Common myeloid progenitor, CD34-positive (primary cell): ENCODE measurements at regions of chr11 and their contacts with region 1.

Region 1: DNA sequence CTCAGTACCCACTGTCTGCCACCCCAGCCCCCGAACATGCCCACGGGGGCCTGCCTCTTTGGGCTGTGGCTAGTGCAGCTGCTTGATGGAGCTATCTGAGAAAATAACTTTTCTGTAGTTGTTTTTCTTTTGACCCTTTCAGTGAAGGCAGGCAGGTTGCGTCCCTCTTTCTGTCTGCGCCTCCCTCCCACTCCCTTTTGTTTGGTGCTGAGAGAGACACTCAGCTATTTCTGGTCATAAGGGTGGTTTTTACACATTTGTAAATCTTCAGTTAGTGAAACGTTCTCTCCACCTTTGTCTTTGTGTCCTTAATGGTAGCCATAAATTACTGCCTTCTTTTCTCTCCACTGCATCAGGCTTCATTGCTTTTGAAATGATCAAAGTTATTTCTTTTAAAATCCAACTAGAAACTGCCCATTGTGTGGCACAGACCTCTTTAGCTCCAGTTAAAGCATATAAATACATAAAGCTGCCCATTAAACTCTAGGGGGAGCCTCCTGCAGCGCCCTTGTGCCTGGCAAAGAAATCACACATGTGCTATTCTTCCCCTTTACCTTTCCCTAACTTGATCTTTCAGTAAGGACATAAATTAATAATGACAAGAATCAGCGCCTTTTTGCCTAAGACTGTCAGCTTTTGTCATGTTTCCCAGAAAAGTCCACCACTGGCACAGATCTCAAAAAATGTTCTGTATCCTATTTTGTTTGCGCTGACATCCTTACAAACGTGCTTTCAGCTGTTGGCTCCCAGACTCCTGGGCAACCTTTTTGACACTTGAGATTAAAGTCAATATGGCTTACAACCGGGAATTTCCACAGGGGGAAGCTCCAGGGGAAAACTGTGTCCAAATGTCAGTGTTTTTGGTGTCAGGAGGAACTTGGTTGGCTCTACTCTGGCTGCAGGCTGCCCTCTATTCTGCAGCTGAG is 1.7 kb upstream of the SCUBE2 start:
- DNase-seq: peak; percentile 23 to 39 (median 37)
- H3K4me3 ChIP-seq: no peak overlapping the region
- H3K27ac ChIP-seq: no peak overlapping the region
- H3K4me1 ChIP-seq: peaks cover 0 to 13% (median 11%) of the 10 kb centered on the region in 4 experiments
- H3K27me3 ChIP-seq: peaks cover 0 to 48% (median 21%) of the 10 kb centered on the region in 5 experiments

Region 2: GRCh38 chr11:9060700-9061111 is 32.4 kb before region 1 on chr11:
- CTCF ChIA-PET with region 1: no interaction called
- POLR2A ChIA-PET with region 1: no interaction called
- DNase-seq: peak; percentile 17 to 73 (median 72)
- H3K4me3 ChIP-seq: no peak overlapping the region
- H3K27ac ChIP-seq: no peak overlapping the region
- H3K4me1 ChIP-seq: peaks cover 0 to 3% (median 1%) of the 10 kb centered on the region in 4 experiments
- H3K27me3 ChIP-seq: no peaks in the 10 kb centered on the region

Region 3: GRCh38 chr11:9075556-9075955 is 17.6 kb before region 1 on chr11:
- CTCF ChIA-PET with region 1: interaction called, 13 read pairs
- POLR2A ChIA-PET with region 1: no interaction called
- DNase-seq: no peak
- H3K4me3 ChIP-seq: no peak overlapping the region
- H3K27ac ChIP-seq: no peak overlapping the region
- H3K4me1 ChIP-seq: no peaks in the 10 kb centered on the region
- H3K27me3 ChIP-seq: peaks cover 0 to 2% (median 0%) of the 10 kb centered on the region in 5 experiments

Region 4: DNA sequence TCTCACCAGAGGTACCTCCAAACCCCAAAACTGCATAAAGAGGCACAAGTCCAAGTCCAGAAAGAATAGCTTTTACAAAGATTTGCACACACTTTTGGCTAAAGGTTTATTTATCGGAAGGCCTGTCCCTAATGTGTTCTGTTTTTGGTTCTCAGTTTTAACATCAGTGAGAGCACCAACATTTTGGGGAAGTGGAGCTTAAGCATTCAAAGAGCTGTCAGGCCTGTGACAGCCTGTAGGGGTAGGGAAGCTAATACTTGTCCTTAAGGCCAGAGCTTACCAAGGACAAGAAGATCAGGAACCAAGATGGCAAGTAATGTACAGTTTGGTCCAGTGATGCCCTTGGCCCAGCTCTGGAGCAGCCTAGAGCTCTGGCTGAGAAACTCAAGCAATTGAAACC is 37.2 kb after region 1 on chr11:
- CTCF ChIA-PET with region 1: interaction called, 21 read pairs
- POLR2A ChIA-PET with region 1: no interaction called
- DNase-seq: peak; percentile 26 to 62 (median 62)
- H3K4me3 ChIP-seq: no peak overlapping the region
- H3K27ac ChIP-seq: no peak overlapping the region
- H3K4me1 ChIP-seq: peaks cover 3 to 32% (median 21%) of the 10 kb centered on the region in 4 experiments
- H3K27me3 ChIP-seq: no peaks in the 10 kb centered on the region